ENCODE measurements at regions of chr10 and their contacts with region 1.

Region 1: DNA sequence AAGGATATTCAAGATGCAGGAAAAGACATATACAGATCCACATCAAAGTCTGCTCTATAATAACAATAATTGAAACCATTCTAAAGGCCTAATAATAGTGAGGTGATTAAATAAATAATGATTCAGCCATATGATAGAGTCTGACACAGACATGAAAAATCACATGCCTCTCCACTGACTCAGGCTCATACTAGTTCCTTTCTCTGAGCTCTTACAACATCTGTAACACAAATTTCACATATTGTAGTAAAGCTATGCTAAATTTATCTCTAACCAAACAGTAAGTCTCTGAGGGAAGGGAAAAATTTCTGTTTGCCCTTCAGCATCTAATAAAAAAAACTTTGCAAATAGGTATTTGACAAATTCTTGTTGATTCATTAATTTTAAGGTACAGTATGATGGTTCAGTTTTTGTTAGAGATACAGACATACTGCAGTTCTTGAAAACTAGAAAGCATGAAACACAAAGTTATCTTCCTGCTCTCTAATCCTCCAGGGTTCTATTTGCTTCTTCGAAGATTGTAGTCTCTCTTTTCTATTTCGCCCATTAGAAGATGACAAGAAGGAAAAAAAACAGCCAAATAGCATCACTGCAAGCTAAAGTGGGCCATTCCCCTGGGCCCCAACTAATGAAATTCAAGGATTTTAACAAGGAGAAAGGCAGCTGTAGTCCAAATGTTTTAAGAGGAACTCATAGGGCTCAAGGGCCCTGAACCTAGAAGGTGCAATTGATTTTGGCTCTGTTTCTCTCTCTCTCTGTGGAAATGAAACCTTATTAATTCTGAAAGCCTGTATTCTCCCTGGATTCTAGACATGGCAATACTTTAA is 53.9 kb downstream of the CUBN start:
- DNase-seq: peak in 1 of 2 donors; percentile 75
- H3K4me3 ChIP-seq: no peak overlapping the region
- H3K27ac ChIP-seq: peak overlapping the region; percentile 82 to 84
- H3K4me1 ChIP-seq: peaks cover 0 to 27% of the 10 kb centered on the region in 2 donors
- H3K27me3 ChIP-seq: no peaks in the 10 kb centered on the region
- CTCF ChIP-seq: no peak

Region 2: GRCh38 chr10:16843252-16843870 is 232.4 kb before region 1 on chr10:
- intact Hi-C with region 1: loop called (anchors 10 kb)
- DNase-seq: no peak
- H3K4me3 ChIP-seq: no peak overlapping the region
- H3K27ac ChIP-seq: no peak overlapping the region
- H3K4me1 ChIP-seq: peaks cover 5 to 13% of the 10 kb centered on the region in 2 donors
- H3K27me3 ChIP-seq: no peaks in the 10 kb centered on the region
- CTCF ChIP-seq: peak; percentile 62 to 69 (median 67)

Region 3: DNA sequence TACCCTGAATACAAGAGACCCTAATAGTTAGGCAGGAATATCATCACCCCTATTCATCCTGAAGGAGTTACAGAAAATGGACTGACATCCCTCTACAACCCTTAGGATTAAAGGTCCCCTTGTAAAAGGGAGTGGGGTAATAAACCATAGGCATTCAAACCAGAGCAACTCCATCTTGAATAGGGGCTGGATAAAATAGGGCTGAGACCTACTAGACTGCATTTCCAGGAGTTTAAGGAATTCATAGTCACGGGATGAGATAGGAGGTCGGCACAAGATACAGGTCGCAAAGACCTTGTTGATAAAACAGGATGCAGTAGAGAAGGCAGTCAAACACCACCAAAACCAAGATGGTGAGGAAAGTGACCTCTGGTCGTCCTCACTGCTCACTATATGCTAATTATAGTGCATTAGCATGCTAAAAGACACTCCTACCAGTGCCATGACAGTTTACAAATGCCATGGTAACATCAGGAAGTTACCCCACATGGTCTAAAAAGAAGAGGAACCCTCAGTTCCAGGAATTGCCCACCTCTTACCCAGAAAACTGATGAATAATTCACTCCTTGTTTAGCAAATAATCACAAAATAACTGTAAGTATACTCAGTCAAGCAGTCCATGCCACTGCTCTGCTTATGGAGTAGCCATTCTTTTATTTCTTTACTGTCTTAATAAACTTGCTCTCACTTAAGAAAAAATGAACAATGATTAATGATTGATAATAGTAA is 16.6 kb after region 1 on chr10:
- intact Hi-C with region 1: no loop called
- DNase-seq: no peak
- H3K4me3 ChIP-seq: no peak overlapping the region
- H3K27ac ChIP-seq: no peak overlapping the region
- H3K4me1 ChIP-seq: peaks cover 0 to 3% of the 10 kb centered on the region in 2 donors
- H3K27me3 ChIP-seq: no peaks in the 10 kb centered on the region
- CTCF ChIP-seq: no peak

Region 4: GRCh38 chr10:17144757-17145156 is 69.0 kb after region 1 on chr10:
- intact Hi-C with region 1: loop called (anchors 5 kb)
- DNase-seq: no peak
- H3K4me3 ChIP-seq: no peak overlapping the region
- H3K27ac ChIP-seq: no peak overlapping the region
- H3K4me1 ChIP-seq: peaks cover 3 to 25% of the 10 kb centered on the region in 2 donors
- H3K27me3 ChIP-seq: no peaks in the 10 kb centered on the region
- CTCF ChIP-seq: no peak

Region 5: DNA sequence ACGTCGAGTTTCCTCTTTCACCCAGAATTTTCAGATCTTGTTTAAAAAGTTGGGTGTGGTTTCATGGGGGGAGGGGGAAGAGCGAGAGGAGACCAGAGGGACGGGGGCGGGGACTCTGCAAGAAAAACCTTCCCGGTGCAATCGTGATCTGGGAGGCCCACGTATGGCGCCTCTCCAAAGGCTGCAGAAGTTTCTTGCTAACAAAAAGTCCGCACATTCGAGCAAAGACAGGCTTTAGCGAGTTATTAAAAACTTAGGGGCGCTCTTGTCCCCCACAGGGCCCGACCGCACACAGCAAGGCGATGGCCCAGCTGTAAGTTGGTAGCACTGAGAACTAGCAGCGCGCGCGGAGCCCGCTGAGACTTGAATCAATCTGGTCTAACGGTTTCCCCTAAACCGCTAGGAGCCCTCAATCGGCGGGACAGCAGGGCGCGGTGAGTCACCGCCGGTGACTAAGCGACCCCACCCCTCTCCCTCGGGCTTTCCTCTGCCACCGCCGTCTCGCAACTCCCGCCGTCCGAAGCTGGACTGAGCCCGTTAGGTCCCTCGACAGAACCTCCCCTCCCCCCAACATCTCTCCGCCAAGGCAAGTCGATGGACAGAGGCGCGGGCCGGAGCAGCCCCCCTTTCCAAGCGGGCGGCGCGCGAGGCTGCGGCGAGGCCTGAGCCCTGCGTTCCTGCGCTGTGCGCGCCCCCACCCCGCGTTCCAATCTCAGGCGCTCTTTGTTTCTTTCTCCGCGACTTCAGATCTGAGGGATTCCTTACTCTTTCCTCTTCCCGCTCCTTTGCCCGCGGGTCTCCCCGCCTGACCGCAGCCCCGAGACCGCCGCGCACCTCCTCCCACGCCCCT is 152.6 kb after region 1 on chr10 and contains the start of gene VIM:
- intact Hi-C with region 1: loop called (anchors 5 kb)
- DNase-seq: peak; percentile 91 to 98
- H3K4me3 ChIP-seq: peak within 1 kb of the TSS; percentile 87 to 93
- H3K27ac ChIP-seq: peak within 1 kb of the TSS; percentile 97 to 99
- H3K4me1 ChIP-seq: peaks cover 0 to 22% of the 10 kb centered on the region in 2 donors
- H3K27me3 ChIP-seq: no peaks in the 10 kb centered on the region
- CTCF ChIP-seq: peak in 2 of 3 experiments; percentile 12 to 13
- total RNA-seq, gene VIM: 6,230 TPM